Activated CD4-positive, alpha-beta T cell treated with anti-CD3 and anti-CD28 coated beads, Interleukin-2, amount 10 ng/mL, durations not matched to agents 24 days and 14 days (primary cell): ENCODE measurements at regions of chr7 and their contacts with region 1.

Region 1: GRCh38 chr7:89622838-89623672 is 531.2 kb upstream of the STEAP1 start:
- DNase-seq: peak; percentile 85
- H3K4me3 Mint-ChIP-seq: no peak overlapping the region
- H3K27ac Mint-ChIP-seq: no peak overlapping the region
- H3K4me1 Mint-ChIP-seq: peaks cover 25% of the 10 kb centered on the region
- H3K27me3 Mint-ChIP-seq: peaks cover 4% of the 10 kb centered on the region

Region 2: DNA sequence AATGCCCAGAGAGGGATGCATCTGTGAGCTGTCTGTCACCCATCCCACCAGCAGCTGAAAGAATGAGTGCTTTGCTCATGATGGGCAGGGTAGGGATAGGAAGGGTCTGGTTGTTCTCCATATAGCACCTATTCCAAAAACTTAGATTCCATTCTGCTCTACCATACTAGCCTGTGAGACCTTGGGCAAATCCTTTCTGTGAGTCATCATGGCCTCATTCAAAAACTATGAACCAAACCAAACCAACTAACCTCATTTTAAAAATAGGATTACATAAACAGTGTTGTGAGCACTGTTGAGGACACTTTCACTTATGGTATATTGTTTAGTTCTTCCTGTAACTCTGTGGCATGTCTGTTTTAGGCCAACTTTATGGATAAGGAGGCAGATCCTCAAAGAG is 1285.5 kb before region 1 on chr7:
- intact Hi-C with region 1: loop called (anchors 10 kb)
- DNase-seq: no peak
- H3K4me3 Mint-ChIP-seq: no peak overlapping the region
- H3K27ac Mint-ChIP-seq: no peak overlapping the region
- H3K4me1 Mint-ChIP-seq: no peaks in the 10 kb centered on the region
- H3K27me3 Mint-ChIP-seq: peaks cover 1% of the 10 kb centered on the region

Region 3: GRCh38 chr7:88546808-88547207 is 1076.2 kb before region 1 on chr7:
- intact Hi-C with region 1: loop called (anchors 2 kb)
- DNase-seq: peak; percentile 78
- H3K4me3 Mint-ChIP-seq: no peak overlapping the region
- H3K27ac Mint-ChIP-seq: no peak overlapping the region
- H3K4me1 Mint-ChIP-seq: no peaks in the 10 kb centered on the region
- H3K27me3 Mint-ChIP-seq: no peaks in the 10 kb centered on the region

Region 4: DNA sequence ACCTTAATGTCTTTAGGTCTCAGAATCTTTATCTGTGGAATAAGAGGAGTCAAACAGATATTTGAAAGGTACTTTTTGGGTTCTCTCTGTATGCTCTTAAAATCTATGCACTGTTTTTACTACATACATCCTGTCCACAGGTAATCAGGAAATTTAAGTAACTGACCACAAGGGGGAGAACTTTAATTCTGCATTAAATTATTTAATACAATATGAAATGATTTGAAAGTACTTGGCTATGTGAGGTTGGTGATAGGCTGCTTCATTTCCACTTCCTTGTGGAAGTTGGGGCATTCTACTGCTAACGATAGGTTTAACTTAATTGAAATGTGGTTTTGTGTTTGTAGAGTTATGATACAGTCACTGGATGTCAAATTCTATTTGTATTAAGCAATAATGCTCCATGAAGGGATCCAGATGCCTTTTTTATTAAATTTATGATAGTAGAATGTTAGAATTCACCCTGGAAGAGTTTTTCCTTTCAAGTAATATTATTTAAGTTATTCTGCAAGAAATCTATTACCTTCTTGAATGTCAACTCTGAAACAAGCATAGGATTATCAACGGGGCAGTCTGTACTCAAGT is 833.5 kb before region 1 on chr7:
- intact Hi-C with region 1: loop called (anchors 2 kb)
- DNase-seq: no peak
- H3K4me3 Mint-ChIP-seq: no peak overlapping the region
- H3K27ac Mint-ChIP-seq: no peak overlapping the region
- H3K4me1 Mint-ChIP-seq: no peaks in the 10 kb centered on the region
- H3K27me3 Mint-ChIP-seq: peaks cover 1% of the 10 kb centered on the region

Region 5: DNA sequence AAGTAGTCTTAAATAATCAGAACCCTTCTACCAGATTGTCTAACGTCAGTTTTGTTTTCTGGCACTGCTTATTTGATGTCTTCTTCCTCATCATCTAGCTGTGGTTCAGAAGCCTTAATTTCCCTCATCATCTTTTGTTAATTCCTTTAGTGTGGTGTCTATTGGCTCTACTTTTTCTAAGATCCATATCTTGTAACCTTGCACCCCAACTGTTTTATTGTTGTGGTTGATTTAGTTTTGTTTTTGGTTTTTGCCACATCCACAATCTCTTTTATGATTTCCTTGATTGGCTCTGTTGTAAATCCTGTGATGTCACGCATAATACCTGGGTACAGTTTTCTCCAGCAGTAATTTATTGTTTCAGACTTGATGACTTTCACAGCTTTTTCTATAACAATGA is 364.0 kb before region 1 on chr7:
- intact Hi-C with region 1: no loop called
- DNase-seq: no peak
- H3K4me3 Mint-ChIP-seq: no peak overlapping the region
- H3K27ac Mint-ChIP-seq: no peak overlapping the region
- H3K4me1 Mint-ChIP-seq: peaks cover 3% of the 10 kb centered on the region
- H3K27me3 Mint-ChIP-seq: no peaks in the 10 kb centered on the region

Region 6: GRCh38 chr7:89283302-89283701 is 339.8 kb before region 1 on chr7:
- intact Hi-C with region 1: no loop called
- DNase-seq: no peak
- H3K4me3 Mint-ChIP-seq: no peak overlapping the region
- H3K27ac Mint-ChIP-seq: no peak overlapping the region
- H3K4me1 Mint-ChIP-seq: no peaks in the 10 kb centered on the region
- H3K27me3 Mint-ChIP-seq: no peaks in the 10 kb centered on the region

Region 7: GRCh38 chr7:89503281-89503680 is 119.8 kb before region 1 on chr7:
- intact Hi-C with region 1: loop called (anchors 10 kb)
- DNase-seq: no peak
- H3K4me3 Mint-ChIP-seq: no peak overlapping the region
- H3K27ac Mint-ChIP-seq: no peak overlapping the region
- H3K4me1 Mint-ChIP-seq: no peaks in the 10 kb centered on the region
- H3K27me3 Mint-ChIP-seq: no peaks in the 10 kb centered on the region

Region 8: DNA sequence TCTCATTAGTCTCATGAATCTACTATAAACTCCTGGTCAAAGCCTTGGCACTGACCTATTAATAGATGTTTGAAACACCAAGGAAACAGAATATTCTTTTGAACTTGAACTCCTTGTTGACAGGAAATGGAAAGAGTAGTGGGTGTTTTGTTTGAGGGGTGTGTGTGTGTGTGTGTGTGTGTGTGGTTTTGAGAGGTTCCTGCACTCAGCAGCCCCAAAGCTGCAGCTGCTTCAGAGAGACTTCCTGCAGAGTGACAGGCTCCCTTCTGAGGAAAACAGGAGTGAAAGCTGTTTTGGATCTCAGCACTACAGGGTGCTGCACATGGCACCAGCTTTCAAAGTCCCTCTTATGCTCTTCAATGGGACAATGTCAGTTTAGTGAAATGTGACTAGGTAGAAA is 15.3 kb before region 1 on chr7:
- intact Hi-C with region 1: loop called (anchors 1 kb)
- DNase-seq: peak; percentile 88
- H3K4me3 Mint-ChIP-seq: peak overlapping the region; percentile 48
- H3K27ac Mint-ChIP-seq: peak overlapping the region; percentile 93
- H3K4me1 Mint-ChIP-seq: peaks cover 51% of the 10 kb centered on the region
- H3K27me3 Mint-ChIP-seq: peaks cover 2% of the 10 kb centered on the region

Region 9: DNA sequence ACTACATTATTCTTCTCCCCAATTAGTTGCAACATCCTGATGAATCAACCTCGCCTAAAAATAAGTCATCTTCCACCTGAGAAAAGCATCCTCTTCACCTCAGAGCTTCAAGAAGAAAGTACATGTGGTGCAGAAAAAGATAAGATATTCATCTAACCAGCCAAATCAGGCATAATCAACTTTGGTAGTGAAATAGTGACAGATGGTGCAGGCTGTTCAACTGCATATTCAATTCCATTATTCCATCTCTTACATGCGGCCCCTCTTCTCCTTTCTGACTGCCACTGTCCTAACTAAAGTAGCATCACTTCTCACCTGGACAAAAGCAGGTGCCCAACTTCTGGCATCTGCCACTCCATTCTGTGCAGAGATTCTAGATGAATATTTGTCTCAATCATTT is 382.8 kb after region 1 on chr7:
- intact Hi-C with region 1: no loop called
- DNase-seq: no peak
- H3K4me3 Mint-ChIP-seq: no peak overlapping the region
- H3K27ac Mint-ChIP-seq: no peak overlapping the region
- H3K4me1 Mint-ChIP-seq: no peaks in the 10 kb centered on the region
- H3K27me3 Mint-ChIP-seq: no peaks in the 10 kb centered on the region